ENCODE measurements at regions of chr6 and their contacts with region 1.

Region 1: GRCh38 chr6:53199156-53199555 is 50.5 kb upstream of the GCM1 start:
- DNase-seq: no peak
- ATAC-seq: peak; percentile 97
- H3K4me3 Mint-ChIP-seq: peak overlapping the region; percentile 17
- H3K27ac Mint-ChIP-seq: peak overlapping the region; percentile 80
- H3K4me1 Mint-ChIP-seq: peaks cover 75% of the 10 kb centered on the region
- H3K27me3 Mint-ChIP-seq: no peaks in the 10 kb centered on the region
- CTCF ChIP-seq: no peak

Region 2: DNA sequence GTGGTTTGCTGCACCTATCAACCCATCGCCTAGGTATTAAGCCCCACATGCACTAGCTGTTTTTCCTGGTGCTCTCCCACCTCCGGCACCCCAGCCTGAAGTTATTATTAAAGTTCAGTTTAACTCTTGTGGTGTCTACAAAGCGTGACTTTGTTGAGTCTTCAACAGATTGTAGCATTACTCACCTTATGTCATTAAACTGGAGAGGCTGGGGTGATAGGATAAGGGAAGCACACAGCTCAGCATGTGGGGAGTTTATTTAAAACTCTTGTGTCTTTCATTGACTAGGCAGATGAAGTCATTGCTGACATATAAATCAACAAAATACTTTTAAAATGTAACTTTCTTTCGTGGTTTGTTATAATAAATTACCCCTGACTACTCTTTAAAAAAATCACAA is 34.2 kb after region 1 on chr6:
- CTCF ChIA-PET with region 1: interaction called, 3 read pairs
- POLR2A ChIA-PET with region 1: interaction called, 14 read pairs
- intact Hi-C with region 1: loop called (anchors 1 kb)
- DNase-seq: no peak
- ATAC-seq: no peak
- H3K4me3 Mint-ChIP-seq: no peak overlapping the region
- H3K27ac Mint-ChIP-seq: peak overlapping the region; percentile 97
- H3K4me1 Mint-ChIP-seq: peaks cover 80% of the 10 kb centered on the region
- H3K27me3 Mint-ChIP-seq: no peaks in the 10 kb centered on the region
- CTCF ChIP-seq: no peak